Activated B cell treated with CpG ODN at 0.5 μM for 24 hours (primary cell): ENCODE measurements at regions of chr16 and their contacts with region 1.

Region 1: GRCh38 chr16:56203052-56203451 is 11.8 kb downstream of the GNAO1 start:
- DNase-seq: no peak
- ATAC-seq: peak; percentile 92
- H3K4me3 Mint-ChIP-seq: no peak overlapping the region
- H3K27ac Mint-ChIP-seq: no peak overlapping the region
- H3K4me1 Mint-ChIP-seq: peaks cover 25% of the 10 kb centered on the region
- H3K27me3 Mint-ChIP-seq: no peaks in the 10 kb centered on the region
- CTCF ChIP-seq: no peak

Region 2: GRCh38 chr16:55842369-55843104 is 360.5 kb before region 1 on chr16:
- CTCF ChIA-PET with region 1: interaction called, 3 read pairs
- POLR2A ChIA-PET with region 1: no interaction called
- intact Hi-C with region 1: loop called (anchors 2 kb)
- DNase-seq: no peak
- ATAC-seq: no peak
- H3K4me3 Mint-ChIP-seq: no peak overlapping the region
- H3K27ac Mint-ChIP-seq: no peak overlapping the region
- H3K4me1 Mint-ChIP-seq: no peaks in the 10 kb centered on the region
- H3K27me3 Mint-ChIP-seq: peaks cover 18% of the 10 kb centered on the region
- CTCF ChIP-seq: no peak

Region 3: GRCh38 chr16:55944377-55944802 is 258.7 kb before region 1 on chr16:
- CTCF ChIA-PET with region 1: interaction called, 61 read pairs
- POLR2A ChIA-PET with region 1: interaction called, 3 read pairs
- intact Hi-C with region 1: loop called (anchors 1 kb)
- DNase-seq: peak; percentile 34
- ATAC-seq: no peak
- H3K4me3 Mint-ChIP-seq: no peak overlapping the region
- H3K27ac Mint-ChIP-seq: no peak overlapping the region
- H3K4me1 Mint-ChIP-seq: peaks cover 5% of the 10 kb centered on the region
- H3K27me3 Mint-ChIP-seq: peaks cover 22% of the 10 kb centered on the region
- CTCF ChIP-seq: peak; percentile 70

Region 4: GRCh38 chr16:56041686-56042085 is 161.4 kb before region 1 on chr16:
- CTCF ChIA-PET with region 1: interaction called, 15 read pairs
- POLR2A ChIA-PET with region 1: no interaction called
- intact Hi-C with region 1: loop called (anchors 1 kb)
- DNase-seq: no peak
- ATAC-seq: peak; percentile 56
- H3K4me3 Mint-ChIP-seq: no peak overlapping the region
- H3K27ac Mint-ChIP-seq: no peak overlapping the region
- H3K4me1 Mint-ChIP-seq: no peaks in the 10 kb centered on the region
- H3K27me3 Mint-ChIP-seq: peaks cover 9% of the 10 kb centered on the region
- CTCF ChIP-seq: no peak

Region 5: GRCh38 chr16:56048425-56049105 is 154.5 kb before region 1 on chr16:
- CTCF ChIA-PET with region 1: interaction called, 7 read pairs
- POLR2A ChIA-PET with region 1: no interaction called
- intact Hi-C with region 1: loop called (anchors 1 kb)
- DNase-seq: no peak
- ATAC-seq: peak; percentile 94
- H3K4me3 Mint-ChIP-seq: no peak overlapping the region
- H3K27ac Mint-ChIP-seq: peak overlapping the region; percentile 13
- H3K4me1 Mint-ChIP-seq: peaks cover 19% of the 10 kb centered on the region
- H3K27me3 Mint-ChIP-seq: peaks cover 4% of the 10 kb centered on the region
- CTCF ChIP-seq: no peak

Region 6: DNA sequence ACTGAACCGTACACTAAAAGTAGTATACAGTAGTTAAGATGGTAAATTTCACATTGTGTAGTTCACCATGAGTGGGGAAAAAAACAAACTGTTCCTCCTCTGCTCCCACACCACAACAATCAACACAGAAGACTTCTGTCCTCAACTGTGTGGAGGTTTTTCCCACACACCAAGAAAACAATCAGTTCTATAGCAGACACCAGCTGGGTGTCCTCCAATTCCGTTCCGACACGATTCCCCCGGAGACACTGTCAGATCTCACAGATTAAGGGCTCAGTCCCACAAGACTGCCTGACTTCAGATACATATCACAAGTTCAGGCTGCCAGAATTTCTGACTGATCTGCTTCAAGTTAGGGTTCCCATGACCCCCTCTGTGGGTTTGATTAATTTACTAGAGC is 285.0 kb after region 1 on chr16:
- CTCF ChIA-PET with region 1: no interaction called
- POLR2A ChIA-PET with region 1: no interaction called
- intact Hi-C with region 1: no loop called
- DNase-seq: no peak
- ATAC-seq: no peak
- H3K4me3 Mint-ChIP-seq: no peak overlapping the region
- H3K27ac Mint-ChIP-seq: no peak overlapping the region
- H3K4me1 Mint-ChIP-seq: peaks cover 9% of the 10 kb centered on the region
- H3K27me3 Mint-ChIP-seq: no peaks in the 10 kb centered on the region
- CTCF ChIP-seq: no peak